Endothelial cell of umbilical vein (primary cell): ENCODE measurements at regions of chr18 and their contacts with region 1.

Region 1: DNA sequence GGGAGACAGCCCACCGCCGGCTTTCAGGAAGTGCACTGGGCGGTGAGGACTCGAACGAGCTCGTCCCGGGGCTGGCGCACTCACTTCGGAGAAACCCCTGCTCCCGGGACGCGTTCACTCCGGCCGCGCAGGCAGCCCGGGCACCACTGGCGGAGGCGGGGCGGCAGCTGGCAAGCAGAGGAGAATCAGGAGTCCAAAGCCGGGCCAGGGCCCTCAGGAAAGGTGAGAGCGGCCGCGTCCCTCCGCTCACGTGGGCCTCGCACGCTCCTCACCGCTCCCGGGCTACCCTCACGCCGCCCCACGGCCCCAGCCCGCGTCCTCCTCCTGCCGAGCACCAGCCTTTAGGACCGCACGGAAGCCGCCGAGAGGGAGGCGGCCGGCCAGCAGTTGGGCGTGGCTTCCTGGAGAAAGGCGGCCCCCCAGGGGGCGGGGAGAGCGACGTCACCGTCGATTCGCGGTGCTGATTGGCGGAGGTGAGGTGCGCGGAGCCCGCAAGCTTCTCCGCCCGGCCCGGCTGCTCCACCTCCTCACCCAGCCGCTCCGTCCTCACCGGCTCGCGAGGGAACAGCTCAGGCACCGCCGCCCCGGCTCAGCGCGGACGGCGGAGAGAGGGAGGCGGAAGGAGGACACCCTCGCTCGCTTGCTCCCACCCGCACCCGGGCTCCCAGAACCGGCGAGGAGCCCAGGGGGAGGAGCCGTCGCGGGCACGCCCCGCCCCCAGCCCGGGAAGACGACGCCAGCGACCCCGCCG is at the start of gene ZCCHC2:
- DNase-seq: peak; percentile 99
- H3K4me3 ChIP-seq: peak within 1 kb of the TSS; percentile 85 to 98 (median 96)
- H3K27ac ChIP-seq: peak within 1 kb of the TSS; percentile 94
- H3K4me1 ChIP-seq: peaks cover 30% of the 10 kb centered on the region
- H3K27me3 ChIP-seq: no peaks in the 10 kb centered on the region
- CTCF ChIP-seq: no peak
- POLR2A ChIP-seq: peak; percentile 79
- total RNA-seq, gene ZCCHC2: 20.6 and 27.2 TPM in 2 replicates

Region 2: GRCh38 chr18:62186774-62187542 is 335.7 kb before region 1 on chr18 and contains the starts of genes PIGN and RELCH:
- CTCF ChIA-PET with region 1: no interaction called
- POLR2A ChIA-PET with region 1: no interaction called
- dilution Hi-C with region 1: no loop called
- intact Hi-C with region 1: loop called (anchors 1 kb)
- DNase-seq: peak; percentile 99
- H3K4me3 ChIP-seq: peak within 1 kb of the TSS; percentile 86 to 97 (median 94)
- H3K27ac ChIP-seq: peak within 1 kb of the TSS; percentile 79
- H3K4me1 ChIP-seq: peaks cover 34% of the 10 kb centered on the region
- H3K27me3 ChIP-seq: no peaks in the 10 kb centered on the region
- CTCF ChIP-seq: no peak
- POLR2A ChIP-seq: peak; percentile 88
- total RNA-seq, gene PIGN: 26.1 and 31.1 TPM in 2 replicates
- total RNA-seq, gene RELCH: 20.7 and 25.2 TPM in 2 replicates

Region 3: DNA sequence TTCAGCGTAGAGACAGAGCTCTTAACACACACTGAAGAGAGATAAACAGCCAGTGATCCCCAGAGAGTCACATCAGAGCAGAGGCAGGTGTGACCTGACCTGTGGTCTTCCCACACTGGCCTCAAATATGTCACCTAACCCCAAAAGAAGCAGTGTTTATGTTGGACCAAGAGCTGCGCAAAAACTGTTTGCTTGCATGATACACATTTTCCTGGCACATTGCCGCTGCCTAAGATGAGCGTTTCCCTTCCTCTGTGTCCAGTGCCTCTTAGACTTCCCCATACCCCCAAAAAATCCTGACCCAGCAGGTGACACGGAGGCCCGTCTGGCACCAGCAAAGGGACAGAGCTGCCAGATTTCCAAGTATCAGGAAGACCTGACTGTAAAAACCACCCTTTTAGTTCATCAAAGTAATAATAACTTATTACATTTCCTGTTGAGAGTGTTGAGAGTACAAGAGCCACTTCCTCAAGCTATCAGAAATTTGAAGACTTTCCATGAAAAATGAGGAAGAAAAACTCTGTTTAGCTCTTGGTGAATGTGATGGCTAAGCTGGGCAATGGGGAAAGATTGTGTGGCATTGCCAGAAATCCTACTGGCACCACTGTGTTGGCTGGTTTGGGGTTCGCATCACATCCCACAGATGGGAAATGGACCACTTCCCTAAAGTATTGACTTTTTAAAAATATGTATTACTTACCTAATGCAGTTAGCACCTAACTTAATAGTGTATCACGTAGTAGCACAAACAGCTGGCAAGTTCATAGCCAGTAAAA is 190.9 kb before region 1 on chr18:
- CTCF ChIA-PET with region 1: no interaction called
- POLR2A ChIA-PET with region 1: no interaction called
- dilution Hi-C with region 1: no loop called
- intact Hi-C with region 1: loop called (anchors 2 kb)
- DNase-seq: peak; percentile 96
- H3K4me3 ChIP-seq: no peak overlapping the region
- H3K27ac ChIP-seq: peak overlapping the region; percentile 29
- H3K4me1 ChIP-seq: peaks cover 81% of the 10 kb centered on the region
- H3K27me3 ChIP-seq: no peaks in the 10 kb centered on the region
- CTCF ChIP-seq: no peak
- POLR2A ChIP-seq: no peak

Region 4: GRCh38 chr18:62485684-62486083 is 37.0 kb before region 1 on chr18:
- CTCF ChIA-PET with region 1: no interaction called
- POLR2A ChIA-PET with region 1: no interaction called
- dilution Hi-C with region 1: no loop called
- intact Hi-C with region 1: loop called (anchors 1 kb)
- DNase-seq: peak; percentile 91
- H3K4me3 ChIP-seq: peak overlapping the region in 1 of 3 experiments; percentile 5
- H3K27ac ChIP-seq: peak overlapping the region; percentile 65
- H3K4me1 ChIP-seq: peaks cover 23% of the 10 kb centered on the region
- H3K27me3 ChIP-seq: no peaks in the 10 kb centered on the region
- CTCF ChIP-seq: no peak
- POLR2A ChIP-seq: no peak

Region 5: DNA sequence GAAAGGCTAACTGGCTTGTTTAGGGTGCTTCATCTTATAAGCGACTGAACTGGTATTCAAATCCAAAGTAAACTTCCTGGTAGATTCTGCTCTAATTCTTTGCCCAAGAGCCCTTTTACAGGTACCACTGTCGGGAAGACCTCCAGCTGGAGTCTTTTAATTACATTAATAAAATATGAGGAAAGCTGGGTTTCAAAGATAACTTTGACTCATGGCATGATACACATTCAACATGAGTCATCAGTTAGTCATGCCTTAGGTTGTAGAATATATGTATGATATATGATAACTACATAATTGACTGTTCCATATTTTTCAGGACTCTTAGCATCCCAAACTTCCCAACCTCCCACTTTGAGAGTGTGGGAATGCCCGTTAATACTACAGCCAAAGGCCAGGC is 32.5 kb after region 1 on chr18:
- CTCF ChIA-PET with region 1: interaction called, 3 read pairs
- POLR2A ChIA-PET with region 1: no interaction called
- dilution Hi-C with region 1: no loop called
- intact Hi-C with region 1: loop called (anchors 1 kb)
- DNase-seq: peak; percentile 76
- H3K4me3 ChIP-seq: no peak overlapping the region
- H3K27ac ChIP-seq: peak overlapping the region; percentile 0
- H3K4me1 ChIP-seq: peaks cover 25% of the 10 kb centered on the region
- H3K27me3 ChIP-seq: no peaks in the 10 kb centered on the region
- CTCF ChIP-seq: no peak
- POLR2A ChIP-seq: no peak